ENCODE measurements at regions of chr4 and their contacts with region 1.

Region 1: GRCh38 chr4:112840061-112840460 is 203.1 kb downstream of the LARP7 start:
- DNase-seq: no peak
- ATAC-seq: no peak

Region 2: GRCh38 chr4:112492321-112492720 is 347.7 kb before region 1 on chr4:
- intact Hi-C with region 1: no loop called
- DNase-seq: no peak
- ATAC-seq: no peak

Region 3: DNA sequence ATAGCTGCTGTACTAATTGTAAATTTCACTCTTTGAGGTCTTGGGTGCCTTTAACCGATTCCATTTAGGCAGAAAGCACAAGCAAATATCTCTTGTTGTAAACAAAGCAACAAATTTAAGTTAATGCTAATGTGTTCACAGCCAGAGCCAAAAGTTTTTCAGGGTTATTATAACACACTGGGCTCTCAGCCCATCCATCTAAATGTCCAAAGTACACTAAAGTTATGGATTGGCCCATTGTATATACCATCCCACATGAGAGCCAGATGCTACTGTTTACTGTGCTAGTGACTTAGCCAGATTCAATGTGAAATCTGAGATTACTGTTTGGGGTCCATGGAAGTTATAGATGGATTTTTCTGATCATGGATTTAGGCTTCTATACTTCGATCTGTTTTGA is 16.5 kb before region 1 on chr4:
- intact Hi-C with region 1: loop called in 1 of 2 experiments (anchors 2 kb)
- DNase-seq: no peak
- ATAC-seq: no peak

Measured in left cardiac atrium (tissue), 4 donors.